A549 (cell line): ENCODE measurements at regions of chr9 and their contacts with region 1.

Region 1: GRCh38 chr9:113657703-113658544 is 194.4 kb downstream of the RGS3 start:
- DNase-seq: peak; percentile 85 to 87
- ATAC-seq: peak; percentile 89 to 96
- H3K4me3 ChIP-seq: no peak overlapping the region
- H3K27ac ChIP-seq: peak overlapping the region in 1 of 2 experiments; percentile 64; a peak in 3 of 6 replicates
- H3K4me1 ChIP-seq: peaks cover 8% of the 10 kb centered on the region
- CTCF ChIP-seq: peak; percentile 94
- EP300 ChIP-seq: no peak
- POLR2A ChIP-seq: no peak
- RAD21 ChIP-seq: peak; percentile 97

Region 2: DNA sequence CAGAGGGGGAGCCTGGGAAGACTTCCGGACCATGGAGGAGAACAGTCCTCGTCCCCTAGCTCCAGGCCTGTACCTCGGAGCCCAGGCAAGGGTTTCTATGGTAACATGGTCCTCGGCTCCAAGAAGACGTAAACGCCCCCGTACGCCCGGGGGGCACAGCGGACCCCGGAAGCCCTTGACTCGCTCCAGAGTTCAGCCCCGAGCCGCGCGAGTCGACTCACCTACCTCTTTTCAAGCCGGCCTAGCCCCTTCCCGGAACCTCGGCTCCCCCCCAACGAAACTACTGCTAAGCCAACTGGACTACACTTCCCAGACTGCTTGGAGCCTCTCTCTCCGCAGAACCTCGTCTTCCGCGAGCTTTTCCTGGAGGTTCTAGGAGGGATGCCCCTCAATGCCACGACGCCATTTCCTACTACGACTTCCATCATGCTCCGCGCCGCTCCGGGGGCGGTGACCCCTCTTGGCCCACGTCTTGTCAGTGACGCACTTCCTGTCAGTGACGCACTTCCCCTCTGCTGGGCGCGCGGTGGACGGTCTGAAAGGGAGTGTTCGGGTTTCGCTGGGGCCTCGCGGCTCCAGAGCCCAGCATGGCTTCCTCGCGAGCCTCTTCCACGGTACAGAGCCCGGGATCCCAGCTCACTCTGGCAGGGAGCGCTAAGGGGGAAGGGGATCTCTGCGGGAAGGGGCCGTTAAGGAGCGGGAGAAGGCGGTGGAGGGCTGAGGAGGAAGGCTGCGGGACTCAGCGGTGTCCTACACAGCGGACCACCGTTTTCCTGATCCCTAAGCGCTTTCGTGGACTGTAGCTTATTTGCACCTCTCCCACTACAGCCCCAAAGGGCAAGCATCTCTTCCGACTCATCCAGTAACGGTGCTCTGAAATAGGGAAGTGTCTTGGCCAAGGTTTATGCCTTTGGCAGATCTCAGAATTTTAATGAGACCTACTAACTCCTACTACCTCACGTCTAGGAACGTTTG is 382.5 kb before region 1 on chr9 and contains the starts of genes CDC26 and PRPF4:
- CTCF ChIA-PET with region 1: interaction called, 35 read pairs
- POLR2A ChIA-PET with region 1: interaction called, 8 read pairs
- DNase-seq: peak; percentile 95 to 98
- ATAC-seq: peak; percentile 96 to 97
- H3K4me3 ChIP-seq: peak within 1 kb of the TSS; percentile 78
- H3K27ac ChIP-seq: peak within 1 kb of the TSS; percentile 88 to 93
- H3K4me1 ChIP-seq: peaks cover 28% of the 10 kb centered on the region; the same call in 2 of the 3 replicates
- CTCF ChIP-seq: no peak
- EP300 ChIP-seq: no peak
- POLR2A ChIP-seq: peak; percentile 95
- RAD21 ChIP-seq: no peak
- polyA plus RNA-seq, gene CDC26: 60.4 and 80.7 TPM in 2 replicates
- polyA plus RNA-seq, gene PRPF4: 61.5 and 62.1 TPM in 2 replicates

Region 3: DNA sequence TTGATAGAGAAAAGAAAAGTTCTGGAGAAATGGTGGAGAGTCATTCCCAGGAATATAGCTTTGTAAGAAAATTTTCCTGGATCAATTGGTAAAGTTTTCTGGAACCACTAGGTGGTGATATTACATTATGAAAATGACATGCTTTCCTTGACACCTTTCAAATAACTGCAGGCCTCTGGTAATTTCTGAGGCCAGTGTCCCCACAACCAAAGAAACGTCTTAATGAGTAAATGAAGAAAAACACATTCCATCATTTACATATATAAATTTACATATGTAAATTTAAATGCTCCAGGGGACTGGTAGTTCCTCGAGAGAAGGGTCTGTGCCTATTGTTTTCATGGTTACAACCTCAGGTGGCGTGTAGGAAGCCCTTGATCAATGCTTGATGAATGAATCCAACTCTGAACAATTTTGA is 211.6 kb before region 1 on chr9:
- CTCF ChIA-PET with region 1: interaction called, 374 read pairs
- POLR2A ChIA-PET with region 1: interaction called, 5 read pairs
- DNase-seq: peak; percentile 52 to 77
- ATAC-seq: peak; percentile 50 to 79; a peak in 4 of 6 replicates
- H3K4me3 ChIP-seq: no peak overlapping the region
- H3K27ac ChIP-seq: no peak overlapping the region
- H3K4me1 ChIP-seq: no peaks in the 10 kb centered on the region
- CTCF ChIP-seq: peak; percentile 91
- EP300 ChIP-seq: no peak
- POLR2A ChIP-seq: no peak
- RAD21 ChIP-seq: peak; percentile 86 to 93

Region 4: DNA sequence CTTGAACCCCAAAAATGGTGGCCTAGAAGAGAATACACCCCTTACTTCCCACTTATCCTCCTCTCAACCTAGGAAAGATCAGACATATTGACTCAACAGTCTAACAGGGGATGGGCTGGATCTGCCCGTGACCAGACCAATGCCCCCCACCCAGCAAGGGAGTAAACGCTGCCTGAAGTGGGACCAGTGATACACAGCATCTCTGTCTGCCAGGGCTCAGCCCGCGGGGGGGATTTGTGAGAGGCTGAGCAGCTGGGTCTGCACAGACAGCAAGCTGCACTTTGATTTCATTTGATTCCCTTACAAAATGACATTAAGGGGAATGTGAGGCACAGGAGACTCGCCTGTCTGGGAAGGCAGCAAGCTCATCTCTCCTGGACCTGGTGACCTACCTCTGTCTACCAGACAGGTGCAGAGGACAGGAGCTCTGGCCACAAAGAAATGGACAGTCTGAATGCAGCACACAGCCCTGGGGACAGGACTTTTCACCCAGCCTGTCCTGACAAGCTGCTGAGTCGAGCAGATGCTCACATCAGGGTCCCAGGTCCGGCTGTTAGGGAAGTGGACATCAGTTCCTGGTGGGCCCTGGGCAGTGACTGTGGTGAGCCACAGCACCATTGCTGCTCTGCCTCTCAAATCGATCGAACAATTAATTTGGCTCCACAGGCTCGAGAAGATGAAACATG is 114.5 kb before region 1 on chr9:
- CTCF ChIA-PET with region 1: interaction called, 33 read pairs
- POLR2A ChIA-PET with region 1: no interaction called
- DNase-seq: no peak
- ATAC-seq: no peak
- H3K4me3 ChIP-seq: no peak overlapping the region
- H3K27ac ChIP-seq: no peak overlapping the region
- H3K4me1 ChIP-seq: no peaks in the 10 kb centered on the region
- CTCF ChIP-seq: no peak
- EP300 ChIP-seq: no peak
- POLR2A ChIP-seq: no peak
- RAD21 ChIP-seq: no peak

Region 5: DNA sequence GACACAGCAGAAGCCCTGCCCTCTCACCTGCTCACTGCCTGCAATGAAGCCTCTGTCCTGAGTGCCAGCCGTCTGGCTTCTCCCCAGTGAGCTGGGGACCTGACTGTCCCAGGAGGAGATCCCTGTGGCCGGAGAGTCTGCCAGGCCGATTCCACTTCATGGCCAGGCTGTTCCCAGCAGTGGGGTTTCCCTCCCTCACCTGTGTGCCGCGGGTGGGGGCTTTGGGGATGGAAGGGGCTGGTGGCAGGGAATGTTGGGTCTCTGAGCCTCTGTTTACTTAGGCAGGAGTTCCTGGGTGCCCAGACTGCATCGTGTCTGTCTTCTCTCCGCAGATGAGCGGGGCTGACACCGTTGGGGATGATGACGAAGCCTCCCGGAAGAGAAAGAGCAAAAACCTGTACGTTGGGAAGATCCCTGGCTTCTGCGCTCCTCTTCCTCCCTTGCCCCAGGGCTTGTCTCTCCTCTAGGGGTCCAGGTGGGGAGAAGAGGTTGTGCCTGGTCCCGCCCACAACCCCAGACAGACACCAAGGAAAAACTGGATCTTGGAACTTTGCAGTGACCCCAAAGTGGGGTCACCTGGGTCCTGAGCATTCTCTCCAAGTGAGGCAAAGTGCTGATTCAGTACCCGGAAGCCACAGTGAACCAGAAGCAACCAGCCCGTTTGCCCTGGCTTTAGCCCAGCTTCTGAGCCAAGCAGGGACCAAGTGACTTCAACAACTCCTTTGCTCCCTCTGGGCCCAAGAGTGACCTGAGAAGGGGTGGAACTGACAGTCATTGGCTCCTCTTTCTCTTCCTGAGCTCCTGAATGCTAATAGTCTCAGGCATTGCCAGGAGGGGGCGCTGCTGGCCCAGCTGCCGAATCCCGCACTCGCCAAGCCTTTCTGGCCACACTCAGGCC is 66.7 kb before region 1 on chr9:
- CTCF ChIA-PET with region 1: interaction called, 1,349 read pairs
- POLR2A ChIA-PET with region 1: interaction called, 26 read pairs
- DNase-seq: peak; percentile 72 to 77
- ATAC-seq: peak; percentile 57 to 68
- H3K4me3 ChIP-seq: no peak overlapping the region
- H3K27ac ChIP-seq: peak overlapping the region; percentile 28 to 53; a peak in 4 of 6 replicates
- H3K4me1 ChIP-seq: peaks cover 21% of the 10 kb centered on the region
- CTCF ChIP-seq: peak; percentile 96
- EP300 ChIP-seq: no peak
- POLR2A ChIP-seq: no peak
- RAD21 ChIP-seq: peak; percentile 98

Region 6: DNA sequence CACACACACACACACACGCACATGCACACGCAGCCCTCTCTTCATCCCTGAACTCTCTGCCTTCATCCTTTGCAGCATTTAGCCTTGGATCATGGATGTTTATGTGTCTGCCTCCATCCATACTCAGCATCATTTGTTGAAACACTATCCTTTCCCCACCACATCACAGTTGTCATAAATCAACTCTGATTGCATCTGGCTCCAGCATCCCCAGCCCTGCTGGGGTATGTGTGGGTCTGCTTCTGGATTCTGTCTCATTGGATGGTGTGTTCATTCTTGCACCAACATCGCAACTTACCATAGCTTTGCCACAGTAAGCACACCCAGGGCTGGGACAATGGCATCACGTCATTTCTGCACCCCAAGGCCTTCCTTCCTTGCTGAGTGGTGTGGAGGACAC is 19.0 kb before region 1 on chr9:
- CTCF ChIA-PET with region 1: interaction called, 87 read pairs
- POLR2A ChIA-PET with region 1: no interaction called
- DNase-seq: no peak
- ATAC-seq: no peak
- H3K4me3 ChIP-seq: no peak overlapping the region
- H3K27ac ChIP-seq: no peak overlapping the region
- H3K4me1 ChIP-seq: no peaks in the 10 kb centered on the region
- CTCF ChIP-seq: no peak
- EP300 ChIP-seq: no peak
- POLR2A ChIP-seq: no peak
- RAD21 ChIP-seq: no peak